Adrenal gland (tissue), 19 donors: ENCODE measurements at regions of chr18 and their contacts with region 1.

Region 1: GRCh38 chr18:21897811-21898210 is 157.2 kb downstream of the MIB1 start:
- DNase-seq: peak; percentile 43 to 75 (median 55)
- H3K4me3 ChIP-seq: no peak overlapping the region
- H3K27ac ChIP-seq: no peak overlapping the region
- H3K4me1 ChIP-seq: no peaks in the 10 kb centered on the region
- H3K27me3 ChIP-seq: no peaks in the 10 kb centered on the region
- CTCF ChIP-seq: peak; percentile 63 to 76 (median 74)
- POLR2A ChIP-seq: no peak

Region 2: DNA sequence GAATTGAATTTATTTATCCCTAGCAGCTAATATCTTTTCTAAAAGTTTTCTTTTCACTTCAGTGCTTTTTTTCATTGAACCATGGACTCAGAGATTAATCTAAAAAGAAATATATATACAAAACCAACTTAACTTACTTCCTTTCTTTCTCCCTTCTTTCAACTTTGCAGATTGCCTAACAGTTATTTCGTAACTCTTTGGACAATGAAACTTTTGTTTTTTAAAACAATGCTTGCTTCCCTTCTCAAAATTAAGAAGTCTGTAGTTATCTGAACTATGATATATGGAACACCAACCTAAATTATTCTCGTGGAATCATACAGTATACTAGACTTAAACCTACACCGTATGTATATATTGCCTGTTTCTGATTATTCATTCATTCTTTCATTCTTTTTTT is 94.3 kb before region 1 on chr18:
- intact Hi-C with region 1: no loop called
- DNase-seq: no peak
- H3K4me3 ChIP-seq: no peak overlapping the region
- H3K27ac ChIP-seq: no peak overlapping the region
- H3K4me1 ChIP-seq: no peaks in the 10 kb centered on the region
- H3K27me3 ChIP-seq: no peaks in the 10 kb centered on the region
- CTCF ChIP-seq: no peak
- POLR2A ChIP-seq: no peak

Region 3: GRCh38 chr18:21949326-21950015 is 51.7 kb after region 1 on chr18:
- intact Hi-C with region 1: loop called in 1 of 2 experiments (anchors 5 kb)
- DNase-seq: no peak
- H3K4me3 ChIP-seq: no peak overlapping the region
- H3K27ac ChIP-seq: no peak overlapping the region
- H3K4me1 ChIP-seq: no peaks in the 10 kb centered on the region
- H3K27me3 ChIP-seq: no peaks in the 10 kb centered on the region
- CTCF ChIP-seq: no peak
- POLR2A ChIP-seq: no peak